ENCODE measurements at regions of chr15 and their contacts with region 1.

Region 1: GRCh38 chr15:71011503-71012155 is 103.6 kb upstream of the THSD4 start:
- DNase-seq: peak; percentile 56
- H3K4me3 ChIP-seq: no peak overlapping the region
- H3K27ac ChIP-seq: no peak overlapping the region
- H3K4me1 ChIP-seq: no peaks in the 10 kb centered on the region
- H3K27me3 ChIP-seq: no peaks in the 10 kb centered on the region
- CTCF ChIP-seq: peak; percentile 54 to 60
- POLR2A ChIP-seq: no peak

Region 2: DNA sequence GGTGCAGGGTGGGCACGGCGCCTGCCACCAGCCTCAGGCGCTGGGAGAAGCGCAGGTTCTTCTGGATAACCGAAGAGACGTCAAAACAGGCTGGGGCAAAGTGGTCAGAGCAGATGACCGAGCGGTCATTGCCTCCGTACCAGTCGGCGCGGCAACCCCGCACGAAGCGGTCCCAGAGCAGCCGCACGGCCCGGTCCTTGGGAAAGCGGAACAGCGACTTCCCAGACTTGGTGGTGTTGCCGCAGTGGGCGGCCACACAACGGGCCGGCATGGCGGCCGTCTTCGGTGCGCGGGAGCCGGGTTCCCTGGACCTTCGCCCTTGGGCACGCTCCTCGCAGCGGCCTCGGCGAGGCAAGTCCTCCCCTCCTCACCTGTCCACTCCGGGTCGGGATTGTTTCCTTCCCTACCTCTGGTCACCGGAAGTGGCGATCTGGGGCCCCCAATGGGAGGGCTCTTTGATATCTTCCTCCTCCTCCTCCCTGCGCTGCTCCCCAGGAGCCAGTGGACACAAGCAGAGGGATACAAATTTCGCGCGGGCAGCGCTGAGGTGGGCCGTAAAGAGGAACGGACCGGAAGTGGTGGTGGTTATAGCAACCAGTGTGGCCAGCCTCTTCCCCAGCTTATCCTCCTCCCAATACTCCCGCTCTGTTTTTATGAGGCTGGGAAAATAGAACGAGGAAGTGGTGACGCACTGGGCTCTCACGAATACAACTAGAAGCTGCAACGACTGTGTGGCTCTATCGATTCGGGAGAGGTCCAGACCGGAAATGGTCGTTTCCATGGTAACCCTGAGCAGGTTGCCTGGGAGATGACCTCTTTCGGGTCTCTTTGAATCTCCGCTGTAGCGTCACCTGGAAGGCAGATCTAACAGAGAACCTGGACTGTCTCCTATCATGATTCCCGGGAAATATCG is 119.4 kb before region 1 on chr15 and contains the starts of genes LRRC49 and THAP10:
- CTCF ChIA-PET with region 1: interaction called, 10 read pairs
- POLR2A ChIA-PET with region 1: no interaction called
- dilution Hi-C with region 1: no loop called
- intact Hi-C with region 1: loop called (anchors 5 kb)
- DNase-seq: peak; percentile 98
- H3K4me3 ChIP-seq: peak within 1 kb of the TSS; percentile 47 to 81 (median 69)
- H3K27ac ChIP-seq: peak within 1 kb of the TSS; percentile 86
- H3K4me1 ChIP-seq: peaks cover 17% of the 10 kb centered on the region
- H3K27me3 ChIP-seq: no peaks in the 10 kb centered on the region
- CTCF ChIP-seq: no peak
- POLR2A ChIP-seq: no peak
- total RNA-seq, gene LRRC49: 6.6 and 7.4 TPM in 2 replicates
- total RNA-seq, gene THAP10: 2.7 and 4.0 TPM in 2 replicates

Region 3: DNA sequence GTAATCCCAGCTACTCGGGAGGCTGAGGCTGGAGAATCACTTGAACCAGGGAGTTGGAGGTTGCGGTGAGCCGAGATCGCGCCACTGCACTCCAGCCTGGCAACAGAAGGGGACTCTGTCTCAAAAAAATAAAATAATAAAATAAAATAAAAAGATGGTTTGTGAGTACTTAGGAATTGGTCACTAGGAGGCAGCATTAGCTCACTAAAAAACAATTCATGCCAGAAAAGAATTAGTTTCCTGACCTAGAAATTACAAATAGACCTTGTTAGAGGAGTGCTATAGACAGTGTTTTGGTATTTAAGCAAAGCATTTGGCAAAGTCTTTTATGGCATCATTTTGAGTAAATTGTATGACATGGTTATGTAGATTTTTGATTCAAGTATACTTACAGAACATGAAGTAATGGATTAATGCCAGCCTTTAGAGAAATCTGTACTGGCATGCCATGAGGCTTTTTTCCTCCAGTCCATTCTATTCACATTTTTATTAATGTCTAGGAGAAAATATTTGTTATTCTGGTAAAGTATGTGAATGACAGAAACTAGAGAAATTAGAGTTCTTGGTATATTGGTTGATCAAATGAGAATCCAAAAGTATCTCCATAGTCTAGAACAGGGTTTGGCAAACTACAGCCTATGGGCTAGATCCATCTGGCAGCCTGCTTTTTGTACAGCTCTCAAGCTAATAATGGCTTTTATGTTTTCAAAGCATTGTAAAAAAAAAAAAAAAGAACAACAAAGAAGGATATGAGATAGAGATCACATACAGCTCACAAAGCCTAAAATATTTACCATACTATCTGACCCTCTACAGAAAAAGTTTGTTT is 37.4 kb before region 1 on chr15:
- CTCF ChIA-PET with region 1: interaction called, 11 read pairs
- POLR2A ChIA-PET with region 1: no interaction called
- dilution Hi-C with region 1: no loop called
- intact Hi-C with region 1: no loop called
- DNase-seq: peak; percentile 66
- H3K4me3 ChIP-seq: no peak overlapping the region
- H3K27ac ChIP-seq: no peak overlapping the region
- H3K4me1 ChIP-seq: no peaks in the 10 kb centered on the region
- H3K27me3 ChIP-seq: no peaks in the 10 kb centered on the region
- CTCF ChIP-seq: peak in 1 of 2 donors; percentile 38
- POLR2A ChIP-seq: no peak

Region 4: DNA sequence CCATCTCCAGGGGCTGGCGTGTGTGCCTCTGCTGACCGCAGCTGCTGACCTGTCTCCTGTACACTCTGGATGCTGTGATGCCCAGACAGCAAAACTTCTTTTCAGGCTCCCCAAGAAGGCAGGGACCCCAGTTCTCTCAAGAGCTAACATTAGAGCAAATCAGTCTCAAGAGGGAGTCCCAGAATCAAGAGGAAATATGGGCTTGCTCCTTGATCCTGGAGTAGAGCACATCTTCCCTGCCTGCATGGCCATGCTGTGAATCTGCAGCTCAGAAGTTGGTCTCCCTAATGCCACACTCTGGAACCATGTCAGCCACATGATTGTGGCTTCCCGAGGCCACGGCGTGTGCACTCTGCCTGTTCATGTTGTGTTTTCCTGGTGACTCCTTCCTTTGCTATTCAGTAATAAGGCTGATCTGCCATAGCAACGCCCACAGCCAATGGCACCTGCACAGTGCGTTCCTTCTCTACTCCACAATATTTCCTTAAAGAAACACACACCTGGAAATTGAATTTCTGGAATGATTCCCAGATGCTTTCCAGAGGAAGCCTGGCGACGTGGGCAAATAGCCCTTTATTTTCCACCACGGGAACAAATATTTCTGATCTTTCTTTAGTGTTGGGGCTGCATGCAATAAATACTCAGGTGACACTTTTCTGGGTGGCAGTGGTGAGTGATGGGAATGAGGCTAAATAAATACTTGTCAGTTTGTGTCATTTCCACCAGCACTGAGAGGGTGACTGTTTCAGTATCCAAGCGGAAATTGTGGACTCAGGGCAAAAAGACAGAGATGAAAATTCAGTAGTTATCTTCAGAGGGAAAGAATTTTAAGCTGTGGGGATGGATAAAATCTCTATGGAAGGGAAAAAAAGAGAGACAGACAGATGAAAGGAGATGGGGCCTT is 81.7 kb after region 1 on chr15:
- CTCF ChIA-PET with region 1: interaction called, 13 read pairs
- POLR2A ChIA-PET with region 1: no interaction called
- dilution Hi-C with region 1: no loop called
- intact Hi-C with region 1: no loop called
- DNase-seq: no peak
- H3K4me3 ChIP-seq: no peak overlapping the region
- H3K27ac ChIP-seq: no peak overlapping the region
- H3K4me1 ChIP-seq: peaks cover 9% of the 10 kb centered on the region
- H3K27me3 ChIP-seq: no peaks in the 10 kb centered on the region
- CTCF ChIP-seq: no peak
- POLR2A ChIP-seq: no peak

Region 5: DNA sequence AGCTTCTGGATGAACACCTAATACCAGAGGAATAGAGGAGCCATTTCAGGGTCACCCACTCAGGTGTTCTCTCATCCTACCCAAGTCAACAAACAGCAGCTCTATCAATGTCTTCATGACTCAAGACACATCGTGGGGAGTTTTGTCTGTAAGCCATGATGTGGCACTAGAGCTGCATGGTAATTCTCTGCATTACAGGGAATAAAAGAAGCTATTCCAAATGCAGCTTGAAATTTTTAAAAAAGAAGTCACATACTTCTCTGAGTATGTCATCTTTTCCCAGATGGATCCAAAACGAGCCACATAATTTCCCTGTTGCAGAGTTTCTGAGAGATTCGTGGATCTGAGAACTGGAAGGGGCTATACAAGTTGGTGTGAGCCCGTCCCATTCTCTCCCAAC is 97.5 kb after region 1 on chr15:
- CTCF ChIA-PET with region 1: interaction called, 60 read pairs
- POLR2A ChIA-PET with region 1: no interaction called
- dilution Hi-C with region 1: no loop called
- intact Hi-C with region 1: no loop called
- DNase-seq: no peak
- H3K4me3 ChIP-seq: no peak overlapping the region
- H3K27ac ChIP-seq: no peak overlapping the region
- H3K4me1 ChIP-seq: no peaks in the 10 kb centered on the region
- H3K27me3 ChIP-seq: no peaks in the 10 kb centered on the region
- CTCF ChIP-seq: no peak
- POLR2A ChIP-seq: no peak